Cardiac septum (tissue), 1 donor: ENCODE measurements at regions of chr3 and their contacts with region 1.

Region 1: DNA sequence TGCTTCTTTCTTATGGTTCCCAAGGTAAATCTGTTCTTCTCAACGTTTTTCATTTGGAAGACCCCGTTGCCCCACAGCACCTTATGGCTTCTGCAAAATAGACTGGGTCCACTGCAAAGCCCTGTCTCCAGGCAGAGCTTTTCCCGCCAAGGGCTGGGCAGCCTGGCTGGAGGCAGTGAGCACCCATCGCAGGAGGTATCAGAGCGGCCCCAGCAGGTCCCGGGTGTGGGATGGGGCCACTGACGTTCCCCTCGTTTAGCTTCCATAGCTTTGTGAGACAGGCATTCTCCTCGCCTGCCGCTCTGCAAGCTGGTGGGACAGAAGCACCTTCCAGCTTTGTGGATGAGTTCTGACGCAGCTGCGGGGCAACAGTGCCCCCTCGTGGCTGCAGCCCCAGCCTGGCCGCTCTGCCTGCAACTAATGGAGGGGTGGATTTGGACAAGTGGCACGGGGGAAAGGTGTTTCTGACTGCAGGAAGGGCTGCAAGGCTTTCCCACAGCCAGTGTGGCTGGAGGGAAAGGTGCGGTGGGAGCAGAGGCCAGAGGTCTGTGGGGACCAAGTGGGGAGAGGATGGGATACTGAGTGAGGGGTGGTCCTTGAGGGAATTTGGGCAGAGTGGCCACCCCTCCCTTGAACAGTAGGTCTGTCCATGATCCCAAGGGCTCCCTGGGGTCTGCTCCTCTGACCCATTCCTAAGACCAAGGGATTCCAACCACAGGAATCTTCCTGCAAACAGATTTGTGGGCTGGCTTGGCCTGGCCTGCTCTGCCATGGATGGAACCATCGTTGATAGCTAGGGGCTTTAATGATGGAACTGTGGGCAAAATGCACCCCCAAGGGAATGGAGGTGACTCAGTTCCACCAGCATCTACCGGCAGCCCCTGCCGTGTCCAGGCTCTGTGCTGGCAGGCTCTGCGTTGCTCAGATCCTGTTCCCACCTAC is 99.4 kb downstream of the FBLN2 start:
- DNase-seq: peak; percentile 86

Region 2: DNA sequence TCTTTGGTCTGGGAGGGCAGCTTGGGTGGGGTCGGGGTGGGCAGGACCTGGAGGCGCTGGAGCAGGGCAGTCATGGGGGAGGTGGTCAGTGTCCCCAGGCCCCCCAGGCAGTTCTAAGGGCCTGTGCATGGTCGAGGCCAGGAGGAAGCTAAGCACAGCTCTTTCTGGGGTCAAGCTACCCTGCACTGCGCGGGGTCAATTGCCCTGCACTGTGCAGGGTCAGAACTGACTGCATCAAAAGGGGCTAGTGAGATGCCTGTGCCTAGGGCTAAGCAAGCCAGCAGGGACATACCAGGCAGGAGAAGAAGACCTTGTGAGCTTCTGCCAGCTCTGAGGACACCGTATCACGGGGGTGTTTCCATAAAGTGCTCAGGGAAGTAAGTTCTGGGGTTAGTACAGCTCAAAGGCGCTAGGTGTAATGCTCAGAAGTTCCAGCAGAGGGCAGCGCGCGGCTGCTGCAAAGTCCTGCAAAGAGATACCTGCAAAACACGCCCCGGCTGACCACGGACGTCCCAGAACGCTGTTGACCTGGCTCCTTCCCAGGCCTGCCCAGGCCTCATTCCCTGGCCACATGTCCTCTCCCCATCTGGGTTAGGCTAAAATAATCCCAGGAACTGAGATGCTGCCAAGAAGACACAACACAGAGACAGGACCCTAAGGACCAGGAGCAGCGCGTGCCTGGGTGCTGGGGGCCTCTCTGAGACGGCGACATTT is 556.3 kb before region 1 on chr3:
- intact Hi-C with region 1: loop called (anchors 5 kb)
- DNase-seq: peak; percentile 93

Region 3: GRCh38 chr3:13495921-13496723 is 152.2 kb before region 1 on chr3:
- intact Hi-C with region 1: loop called (anchors 1 kb)
- DNase-seq: no peak

Region 4: DNA sequence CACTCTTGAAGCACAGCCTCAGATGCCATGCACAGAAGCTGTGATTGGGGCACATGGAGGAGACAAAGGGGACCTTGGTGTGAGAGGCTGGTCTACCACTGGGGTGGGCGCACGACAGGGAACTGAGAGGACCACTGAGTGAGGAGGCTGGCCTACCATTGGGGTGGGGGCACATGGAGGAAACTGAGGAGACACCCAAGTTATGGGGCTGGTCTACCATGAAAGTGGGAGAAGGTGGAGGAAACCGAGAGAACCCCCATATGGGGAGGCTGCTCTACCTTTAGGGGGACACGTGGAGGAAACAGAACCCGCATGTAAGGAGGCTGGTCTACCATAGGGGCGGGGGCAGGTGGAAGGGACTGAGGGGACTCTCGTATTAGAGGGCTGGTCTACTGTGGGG is 54.0 kb after region 1 on chr3:
- intact Hi-C with region 1: no loop called
- DNase-seq: peak; percentile 10

Region 5: DNA sequence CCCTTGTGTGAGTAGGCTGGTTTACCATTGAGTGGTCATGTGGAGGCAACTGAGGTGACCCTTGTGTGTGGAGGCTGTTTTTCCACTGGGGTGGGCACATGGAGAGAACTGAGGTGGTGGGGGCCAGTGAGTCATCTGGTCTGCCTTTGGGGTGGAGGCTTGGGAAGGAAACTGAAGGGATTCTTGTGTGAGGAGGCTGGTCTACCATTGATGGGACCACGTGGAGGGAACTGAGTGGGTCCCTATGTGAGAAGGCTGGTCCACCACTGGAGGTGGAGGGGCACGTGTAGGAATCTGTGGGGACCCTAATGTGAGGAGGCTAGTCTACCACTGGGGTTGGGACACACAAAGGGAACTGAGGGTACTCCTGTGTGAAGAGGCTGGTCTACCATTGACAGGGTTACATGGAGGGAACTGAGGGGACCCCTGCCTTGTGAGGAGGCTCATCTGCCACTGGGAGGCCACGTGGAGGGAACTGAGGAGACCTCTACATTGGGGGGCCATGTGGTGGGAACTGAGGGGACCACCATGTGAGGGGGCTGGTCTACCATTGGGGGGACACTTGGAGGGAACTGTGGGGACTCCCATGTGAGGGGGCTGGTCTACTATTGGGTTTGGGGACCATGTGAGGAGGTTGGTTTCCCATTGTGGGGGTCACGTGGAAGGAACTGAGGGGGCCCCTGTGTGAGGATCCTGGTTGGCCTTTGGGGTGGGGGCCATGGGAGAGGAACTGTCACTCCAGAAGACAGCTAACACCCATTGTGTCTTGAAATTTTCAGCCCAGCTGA is 67.0 kb after region 1 on chr3:
- intact Hi-C with region 1: no loop called
- DNase-seq: peak; percentile 43